Ascending aorta (tissue), 2 donors: ENCODE measurements at regions of chr7 and their contacts with region 1.

Region 1: DNA sequence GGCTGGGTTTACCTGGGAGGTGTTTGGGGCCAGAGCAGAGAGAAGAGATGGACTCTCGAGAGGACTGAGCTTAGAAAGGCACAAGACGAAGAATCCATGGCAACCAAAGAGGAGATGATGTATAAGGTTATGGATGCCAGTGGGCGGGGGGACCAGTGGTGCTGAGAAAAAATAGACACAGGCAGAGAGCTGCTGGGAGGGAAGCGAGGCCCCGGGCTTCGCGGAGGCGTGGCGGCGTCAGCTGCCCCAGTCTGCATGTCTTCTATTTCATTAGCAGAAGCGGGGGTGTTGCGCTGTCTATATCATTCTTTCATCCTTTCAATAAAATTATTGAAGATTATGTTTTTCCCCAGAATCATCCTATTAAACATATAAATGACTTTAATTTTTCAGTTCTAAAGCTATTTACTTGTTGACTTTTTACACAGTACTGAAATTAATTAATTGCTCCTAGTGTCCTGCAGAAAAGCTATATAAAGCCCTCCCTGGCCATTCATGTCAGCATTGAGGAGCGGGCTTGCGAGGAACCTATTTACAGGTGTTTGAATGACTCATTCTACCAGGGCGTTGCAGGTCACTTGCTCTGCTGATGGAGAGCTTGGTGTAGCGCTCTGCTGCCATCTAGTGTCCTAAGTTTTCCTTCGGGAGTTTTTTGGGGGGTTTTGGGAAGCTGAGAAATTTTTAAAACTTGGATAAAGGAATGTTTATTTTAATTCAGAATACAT is 42.9 kb upstream of the BHLHA15 start:
- DNase-seq: no peak
- H3K4me3 ChIP-seq: no peak overlapping the region
- H3K27ac ChIP-seq: no peak overlapping the region
- H3K4me1 ChIP-seq: no peaks in the 10 kb centered on the region
- H3K27me3 ChIP-seq: no peaks in the 10 kb centered on the region
- CTCF ChIP-seq: peak; percentile 71 to 81 (median 75)

Region 2: GRCh38 chr7:97872025-97872669 is 296.2 kb before region 1 on chr7 and contains the start of gene ASNS:
- intact Hi-C with region 1: loop called (anchors 10 kb)
- DNase-seq: peak; percentile 78 to 95
- H3K4me3 ChIP-seq: peak within 1 kb of the TSS; percentile 86 to 94
- H3K27ac ChIP-seq: peak within 1 kb of the TSS; percentile 68 to 86
- H3K4me1 ChIP-seq: peaks cover 0 to 3% of the 10 kb centered on the region in 2 donors
- H3K27me3 ChIP-seq: no peaks in the 10 kb centered on the region
- CTCF ChIP-seq: no peak
- total RNA-seq, gene ASNS: 41.7 TPM

Region 3: DNA sequence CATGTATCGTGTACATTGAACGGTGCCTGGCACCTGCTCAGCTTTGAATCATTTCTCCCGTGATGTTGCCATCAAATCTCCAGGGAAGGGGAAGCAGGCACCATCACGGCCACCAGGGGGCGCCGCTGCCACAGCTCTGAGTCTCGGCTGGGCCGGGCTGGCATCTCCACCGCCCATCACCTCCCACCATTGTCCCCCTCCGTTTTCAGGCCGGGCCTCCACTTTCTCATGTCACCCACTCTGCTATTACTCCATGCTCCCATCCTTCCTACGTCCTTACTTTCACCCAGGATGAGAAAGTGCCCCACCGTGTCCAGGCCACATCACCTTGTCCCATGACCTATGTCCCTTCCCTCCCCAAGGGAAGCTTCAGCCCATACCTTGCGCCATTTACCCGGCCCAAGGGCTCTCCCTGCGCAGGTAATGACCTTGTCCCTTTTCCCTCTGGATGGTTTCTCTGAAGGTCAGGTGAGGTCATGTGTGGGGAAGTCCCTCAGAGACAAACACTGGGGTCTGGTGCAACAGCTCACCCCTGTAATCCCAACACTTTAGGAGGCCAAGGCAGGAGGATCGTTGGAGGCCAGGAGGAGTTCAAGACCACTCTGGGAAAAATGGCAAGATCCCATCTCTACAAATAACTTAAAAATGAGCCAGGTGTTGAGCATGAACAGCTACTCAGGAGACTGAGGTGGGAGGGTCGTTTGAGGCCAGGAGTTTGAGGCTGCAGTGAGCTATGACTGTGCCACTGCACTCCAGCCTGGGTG is 146.6 kb before region 1 on chr7:
- intact Hi-C with region 1: loop called (anchors 5 kb)
- DNase-seq: peak in 1 of 2 donors; percentile 79
- H3K4me3 ChIP-seq: no peak overlapping the region
- H3K27ac ChIP-seq: no peak overlapping the region
- H3K4me1 ChIP-seq: no peaks in the 10 kb centered on the region
- H3K27me3 ChIP-seq: no peaks in the 10 kb centered on the region
- CTCF ChIP-seq: peak; percentile 59 to 74 (median 68)

Region 4: DNA sequence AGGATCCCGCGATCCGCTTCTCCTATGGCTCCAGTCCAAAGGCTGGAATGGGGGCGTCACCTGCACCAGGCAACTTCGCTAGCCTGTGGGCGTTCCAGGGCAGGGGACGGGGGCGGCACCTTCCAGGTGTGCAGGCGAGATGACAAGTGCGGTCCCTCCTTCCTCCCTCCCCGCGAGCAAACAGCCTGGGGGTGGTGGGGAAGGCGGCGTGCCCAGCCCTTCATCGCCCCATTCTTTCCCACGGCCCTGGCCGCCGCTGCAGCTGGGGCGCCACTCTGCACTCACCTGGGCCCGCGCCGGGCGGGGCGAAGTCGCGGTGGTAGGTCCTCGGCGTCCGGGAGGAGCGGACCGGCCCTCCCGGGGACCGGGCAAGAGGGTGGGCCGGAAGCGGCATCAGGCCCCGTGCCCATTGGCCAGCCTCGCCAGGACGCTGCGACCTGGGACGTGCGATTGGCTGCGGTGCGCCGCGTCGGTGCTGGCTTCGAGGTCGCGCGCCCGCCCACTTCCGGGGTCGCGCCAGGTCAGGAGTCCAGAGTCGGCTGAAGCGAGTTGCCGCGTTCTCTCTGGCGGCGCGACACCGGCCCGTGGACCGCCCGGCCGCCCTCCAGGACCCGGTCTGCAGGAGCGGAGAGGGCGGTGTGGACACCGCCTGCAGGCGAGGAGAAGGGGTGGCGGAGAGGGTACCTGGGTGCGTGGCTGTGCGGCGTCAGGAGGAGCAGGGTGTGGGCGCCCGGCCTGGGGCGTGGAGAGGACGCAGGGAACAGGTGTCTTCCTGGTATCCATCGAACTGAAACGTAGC is 83.7 kb after region 1 on chr7 and contains the start of gene TECPR1:
- intact Hi-C with region 1: no loop called
- DNase-seq: peak; percentile 77 to 96
- H3K4me3 ChIP-seq: peak within 1 kb of the TSS; percentile 80 to 90
- H3K27ac ChIP-seq: peak within 1 kb of the TSS; percentile 65 to 81
- H3K4me1 ChIP-seq: peaks cover 6 to 18% of the 10 kb centered on the region in 2 donors
- H3K27me3 ChIP-seq: no peaks in the 10 kb centered on the region
- CTCF ChIP-seq: no peak
- total RNA-seq, gene TECPR1: 28.1 TPM